PC-3 (cell line): ENCODE measurements at regions of chr1 and their contacts with region 1.

Region 1: DNA sequence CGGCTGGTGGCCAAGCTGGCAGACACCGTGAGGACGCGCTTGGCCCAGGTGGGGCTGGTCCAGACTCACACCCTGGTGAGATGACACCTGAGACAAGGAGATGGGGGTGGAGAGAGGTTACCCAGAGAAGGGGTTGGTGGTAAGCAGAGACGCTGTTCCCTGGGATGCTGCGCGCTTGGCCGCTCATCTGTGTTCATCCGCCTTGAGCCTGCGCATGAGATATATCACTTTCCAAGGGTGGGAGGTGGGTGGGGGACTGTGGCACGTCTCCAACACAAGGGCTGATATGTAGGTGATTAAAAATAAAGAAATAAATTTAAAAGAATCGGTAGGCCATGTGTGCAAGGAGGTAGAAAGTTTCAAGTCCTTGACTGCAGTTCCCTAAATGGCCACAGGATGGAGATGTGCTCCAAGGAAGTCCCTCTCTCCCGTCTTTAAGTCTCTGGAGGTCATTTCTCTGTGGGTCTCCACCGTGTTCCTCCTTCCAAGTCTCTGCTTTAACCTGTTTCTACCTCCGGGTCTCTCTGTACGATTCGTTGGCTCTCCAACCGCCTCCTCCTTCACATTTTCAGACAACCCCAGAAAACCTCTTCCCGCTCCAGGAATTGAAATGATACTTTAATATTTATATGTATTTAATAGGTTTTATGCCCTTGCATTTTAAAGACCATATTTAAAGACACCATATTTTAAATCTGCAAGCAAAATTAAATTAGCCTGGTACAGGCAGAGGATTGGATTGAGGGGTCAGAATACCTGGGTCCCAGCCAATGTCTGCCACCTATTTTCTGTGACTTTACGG is 4.5 kb downstream of the TTC24 start:
- DNase-seq: peak; percentile 95
- ATAC-seq: peak; percentile 74
- H3K4me3 ChIP-seq: no peak overlapping the region
- H3K27ac ChIP-seq: no peak overlapping the region
- H3K4me1 ChIP-seq: no peaks in the 10 kb centered on the region
- H3K27me3 ChIP-seq: no peaks in the 10 kb centered on the region
- CTCF ChIP-seq: peak; percentile 88

Region 2: DNA sequence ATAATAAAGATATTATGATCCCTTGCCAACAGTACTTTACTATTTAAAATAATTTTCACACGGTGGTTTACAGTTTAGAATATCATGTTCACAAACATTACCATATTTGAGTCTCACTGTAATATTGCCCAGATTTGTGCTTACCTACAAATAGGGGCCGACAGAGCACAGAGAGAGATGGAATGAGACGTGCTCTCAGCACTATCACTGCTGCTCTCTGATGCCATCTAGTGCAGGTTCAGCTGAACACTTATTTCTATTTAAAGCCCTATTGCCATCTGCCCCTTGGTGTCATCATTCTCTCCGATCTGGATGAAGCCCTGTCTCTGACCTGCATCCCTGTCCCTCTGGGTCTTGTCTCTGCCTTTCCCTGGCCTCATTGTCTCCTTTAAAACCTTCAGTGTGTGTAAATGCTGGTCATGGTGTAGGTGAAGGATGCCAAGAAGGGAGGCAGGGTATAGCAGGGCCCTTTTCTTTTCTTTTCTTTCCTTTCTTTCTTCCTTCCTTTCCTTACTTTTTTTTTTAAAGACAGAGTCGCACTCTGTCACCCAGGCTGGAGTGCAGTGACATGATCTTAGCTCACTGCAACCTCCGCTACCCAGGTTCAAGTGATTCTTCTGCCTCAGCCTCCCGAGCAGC is 24.1 kb after region 1 on chr1:
- CTCF ChIA-PET with region 1: interaction called, 3 read pairs
- POLR2A ChIA-PET with region 1: no interaction called
- intact Hi-C with region 1: loop called (anchors 1 kb)
- DNase-seq: peak; percentile 87
- ATAC-seq: peak; percentile 98
- H3K4me3 ChIP-seq: no peak overlapping the region
- H3K27ac ChIP-seq: no peak overlapping the region
- H3K4me1 ChIP-seq: no peaks in the 10 kb centered on the region
- H3K27me3 ChIP-seq: no peaks in the 10 kb centered on the region
- CTCF ChIP-seq: peak; percentile 92

Region 3: DNA sequence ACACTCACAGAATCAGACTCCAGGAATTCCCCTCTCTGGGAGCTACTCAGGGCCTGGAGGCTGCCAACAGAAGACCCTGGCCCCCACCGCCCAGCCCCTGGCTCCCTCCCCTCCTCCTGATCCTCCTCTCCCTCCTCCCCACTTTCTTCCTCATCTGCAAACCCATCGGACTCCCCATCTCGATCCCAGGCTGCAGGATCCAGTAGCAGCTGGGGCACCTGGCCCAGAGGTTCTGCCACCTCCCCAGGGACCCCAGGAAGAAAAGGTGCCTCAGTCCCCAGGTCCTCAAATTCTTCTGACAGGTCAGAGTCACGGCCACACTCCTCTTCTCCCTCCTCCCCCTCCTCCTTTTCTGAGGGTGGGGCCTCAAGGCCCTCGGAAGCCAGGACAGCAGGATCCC is 85.8 kb after region 1 on chr1:
- CTCF ChIA-PET with region 1: no interaction called
- POLR2A ChIA-PET with region 1: interaction called, 17 read pairs
- intact Hi-C with region 1: no loop called
- DNase-seq: no peak
- ATAC-seq: no peak
- H3K4me3 ChIP-seq: no peak overlapping the region
- H3K27ac ChIP-seq: no peak overlapping the region
- H3K4me1 ChIP-seq: no peaks in the 10 kb centered on the region
- H3K27me3 ChIP-seq: no peaks in the 10 kb centered on the region
- CTCF ChIP-seq: no peak

Region 4: DNA sequence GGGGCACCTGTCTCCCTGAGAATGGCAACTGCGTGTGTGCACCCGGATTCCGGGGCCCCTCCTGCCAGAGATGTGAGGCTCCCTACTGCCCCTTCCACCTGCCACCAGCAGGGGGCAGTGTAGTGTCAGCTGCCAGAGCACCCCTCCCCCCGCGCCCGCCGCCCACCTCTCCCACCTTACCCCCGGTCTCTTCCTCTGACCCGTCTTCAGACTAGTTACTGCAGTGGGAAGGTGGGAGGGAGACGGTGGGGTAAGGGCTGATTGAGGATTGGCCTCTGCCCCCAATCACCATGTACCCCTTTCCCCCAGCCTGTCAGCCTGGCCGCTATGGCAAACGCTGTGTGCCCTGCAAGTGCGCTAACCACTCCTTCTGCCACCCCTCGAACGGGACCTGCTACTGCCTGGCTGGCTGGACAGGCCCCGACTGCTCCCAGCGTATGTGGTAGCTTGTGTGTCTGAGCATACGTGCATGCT is 326.3 kb after region 1 on chr1:
- CTCF ChIA-PET with region 1: no interaction called
- POLR2A ChIA-PET with region 1: no interaction called
- intact Hi-C with region 1: no loop called
- DNase-seq: peak; percentile 55
- ATAC-seq: no peak
- H3K4me3 ChIP-seq: no peak overlapping the region
- H3K27ac ChIP-seq: no peak overlapping the region
- H3K4me1 ChIP-seq: peaks cover 20% of the 10 kb centered on the region
- H3K27me3 ChIP-seq: no peaks in the 10 kb centered on the region
- CTCF ChIP-seq: peak; percentile 93